ENCODE measurements at regions of chr19 and their contacts with region 1.

Region 1: DNA sequence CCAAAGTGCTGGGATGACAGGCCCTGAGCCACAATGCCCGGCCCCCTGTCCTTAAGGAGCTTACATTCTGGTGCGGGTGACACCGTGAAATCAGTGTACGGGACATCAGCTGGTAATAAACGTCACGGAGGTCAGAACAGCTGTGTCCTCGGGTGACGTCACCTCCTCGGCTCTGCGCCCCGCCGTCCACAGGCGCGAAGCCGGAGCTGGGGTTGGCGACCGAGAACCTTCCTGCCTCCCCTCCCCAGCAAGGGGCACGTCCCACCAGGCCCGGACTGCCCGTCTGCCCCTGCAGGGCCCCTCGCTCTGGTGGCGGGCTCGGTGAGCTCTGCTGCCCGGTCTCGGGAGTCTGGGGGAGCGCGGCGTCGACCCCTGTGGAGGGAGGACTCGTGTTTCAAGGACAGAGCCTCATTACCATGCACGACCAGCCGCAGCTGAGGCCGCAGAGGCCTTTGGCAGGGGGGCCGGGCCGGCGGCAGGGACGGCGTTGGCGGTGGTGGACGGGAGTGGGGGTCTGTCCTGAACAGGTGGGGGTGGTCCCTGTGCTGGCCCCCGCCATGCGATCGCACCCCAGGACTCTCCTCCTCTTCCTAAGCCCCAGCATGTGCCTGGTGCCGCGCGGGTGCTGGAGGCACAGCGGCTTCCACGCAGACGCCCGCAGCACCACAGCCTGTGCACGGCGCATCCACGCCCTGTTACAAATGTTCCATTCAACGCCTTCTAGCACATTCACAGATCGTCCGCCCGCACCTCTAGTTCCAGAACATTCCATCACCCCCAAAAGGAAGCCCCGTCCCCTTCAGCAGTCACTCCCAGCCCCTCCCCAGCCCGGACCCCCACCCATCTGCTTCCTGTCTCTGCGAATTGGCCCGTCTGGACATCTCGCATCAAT is 5.4 kb downstream of the LINGO3 start:
- DNase-seq: no peak
- H3K4me3 ChIP-seq: no peak overlapping the region
- H3K27ac ChIP-seq: no peak overlapping the region
- H3K4me1 ChIP-seq: no peaks in the 10 kb centered on the region
- H3K27me3 ChIP-seq: no peaks in the 10 kb centered on the region; the same call in 1 of the 2 replicates
- CTCF ChIP-seq: no peak
- EP300 ChIP-seq: no peak
- RAD21 ChIP-seq: no peak

Region 2: DNA sequence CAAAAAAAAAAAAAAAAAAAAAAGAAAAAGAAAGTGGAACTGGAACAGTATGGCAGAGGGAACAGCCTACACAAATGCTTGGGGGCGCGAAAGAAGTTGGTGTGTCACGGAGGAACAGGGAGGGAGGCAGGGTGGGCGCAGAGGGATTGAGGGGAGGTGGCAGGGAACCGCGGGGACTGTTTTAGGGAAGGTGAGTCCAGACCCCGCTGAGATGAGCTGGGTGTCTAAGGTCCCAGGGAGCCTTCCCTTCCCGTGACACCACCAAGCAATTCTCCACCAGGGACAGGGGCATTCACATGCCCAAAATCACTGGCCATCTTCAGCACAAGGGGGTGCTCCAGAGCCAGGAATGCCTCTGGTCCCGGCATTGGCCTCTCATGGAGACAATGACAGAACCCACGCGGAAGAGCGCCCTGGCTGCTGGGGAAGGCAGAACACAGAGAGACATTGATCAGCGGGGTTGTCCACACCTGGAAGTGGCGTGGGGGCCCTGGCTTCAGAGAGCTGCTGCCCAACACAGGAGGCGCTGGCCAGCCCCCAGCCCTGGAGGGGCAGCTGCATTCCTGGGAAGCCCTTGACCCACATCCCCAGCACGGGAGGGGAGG is 27.5 kb before region 1 on chr19:
- CTCF ChIA-PET with region 1: interaction called, 284 read pairs
- POLR2A ChIA-PET with region 1: interaction called, 4 read pairs
- DNase-seq: peak; percentile 89
- H3K4me3 ChIP-seq: no peak overlapping the region
- H3K27ac ChIP-seq: peak overlapping the region in 1 of 2 experiments; percentile 46; a peak in 2 of 4 replicates
- H3K4me1 ChIP-seq: peaks cover 4 to 28% of the 10 kb centered on the region in 2 experiments; a peak in 1 of 4 replicates
- H3K27me3 ChIP-seq: no peaks in the 10 kb centered on the region
- CTCF ChIP-seq: peak; percentile 59
- EP300 ChIP-seq: no peak
- RAD21 ChIP-seq: peak; percentile 88

Measured in SK-N-SH (cell line).